ENCODE measurements at regions of chr2 and their contacts with region 1.

Region 1: GRCh38 chr2:112941753-112942658 is 31.0 kb downstream of the IL37 start:
- DNase-seq: peak; percentile 89
- H3K4me3 Mint-ChIP-seq: no peak overlapping the region
- H3K27ac Mint-ChIP-seq: no peak overlapping the region
- H3K4me1 Mint-ChIP-seq: peaks cover 11% of the 10 kb centered on the region
- H3K27me3 Mint-ChIP-seq: no peaks in the 10 kb centered on the region
- CTCF ChIP-seq: peak; percentile 92

Region 2: DNA sequence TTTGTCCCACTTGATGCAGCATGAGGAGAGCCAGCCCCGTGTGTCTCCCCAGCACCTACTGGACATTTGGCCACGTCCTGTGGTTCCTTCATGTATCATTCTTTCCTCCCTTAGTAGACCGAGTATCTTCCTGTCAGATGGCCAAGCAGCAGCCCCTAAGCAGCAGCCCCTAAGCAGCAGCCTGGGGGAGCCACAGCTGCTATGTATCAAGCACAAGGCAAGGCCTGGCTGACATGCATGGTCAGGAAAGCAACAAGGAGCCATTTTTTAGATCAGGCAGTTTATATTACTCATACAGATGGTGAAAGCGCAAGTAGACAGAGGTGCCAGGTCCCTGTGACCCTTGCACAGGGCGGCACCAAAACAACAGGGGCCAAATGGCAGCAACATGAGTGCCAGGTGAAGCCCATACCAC is 335.5 kb before region 1 on chr2:
- CTCF ChIA-PET with region 1: no interaction called
- POLR2A ChIA-PET with region 1: no interaction called
- intact Hi-C with region 1: loop called (anchors 5 kb)
- DNase-seq: no peak
- H3K4me3 Mint-ChIP-seq: no peak overlapping the region
- H3K27ac Mint-ChIP-seq: no peak overlapping the region
- H3K4me1 Mint-ChIP-seq: peaks cover 4% of the 10 kb centered on the region
- H3K27me3 Mint-ChIP-seq: no peaks in the 10 kb centered on the region
- CTCF ChIP-seq: no peak

Region 3: DNA sequence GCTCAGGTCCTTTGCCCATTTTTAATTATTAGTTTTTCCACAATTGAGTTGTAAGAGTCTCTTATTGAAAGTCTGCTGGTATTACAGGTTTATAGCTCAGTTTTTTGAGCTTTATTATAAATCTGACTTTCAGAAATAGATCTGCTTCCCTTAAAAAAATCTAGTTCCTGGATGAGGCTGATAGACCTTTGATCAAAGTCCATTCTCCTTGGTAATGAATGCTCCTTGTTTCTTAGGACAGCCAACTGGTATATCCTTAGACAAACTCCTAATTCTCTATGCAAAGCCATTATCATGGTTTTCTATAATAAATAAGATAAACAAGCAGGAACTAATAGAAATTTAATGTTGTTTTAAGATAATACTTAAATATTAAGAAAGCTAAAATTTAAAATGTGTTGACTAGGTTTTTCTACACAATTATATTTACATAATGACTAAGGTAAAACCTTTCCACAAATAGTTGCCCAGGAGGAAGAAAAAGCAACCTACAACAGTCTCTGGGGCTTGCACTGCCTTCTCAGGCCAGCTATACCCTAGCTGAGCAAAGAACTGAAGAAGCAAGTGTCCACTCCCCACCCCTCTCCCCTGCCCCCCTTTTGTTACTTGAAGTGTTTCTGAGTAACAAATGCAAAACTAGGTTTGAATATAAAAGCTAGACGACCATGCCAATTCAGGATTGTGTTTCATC is 204.3 kb before region 1 on chr2:
- CTCF ChIA-PET with region 1: interaction called, 57 read pairs
- POLR2A ChIA-PET with region 1: interaction called, 14 read pairs
- intact Hi-C with region 1: no loop called
- DNase-seq: no peak
- H3K4me3 Mint-ChIP-seq: no peak overlapping the region
- H3K27ac Mint-ChIP-seq: no peak overlapping the region
- H3K4me1 Mint-ChIP-seq: no peaks in the 10 kb centered on the region
- H3K27me3 Mint-ChIP-seq: no peaks in the 10 kb centered on the region
- CTCF ChIP-seq: no peak

Region 4: DNA sequence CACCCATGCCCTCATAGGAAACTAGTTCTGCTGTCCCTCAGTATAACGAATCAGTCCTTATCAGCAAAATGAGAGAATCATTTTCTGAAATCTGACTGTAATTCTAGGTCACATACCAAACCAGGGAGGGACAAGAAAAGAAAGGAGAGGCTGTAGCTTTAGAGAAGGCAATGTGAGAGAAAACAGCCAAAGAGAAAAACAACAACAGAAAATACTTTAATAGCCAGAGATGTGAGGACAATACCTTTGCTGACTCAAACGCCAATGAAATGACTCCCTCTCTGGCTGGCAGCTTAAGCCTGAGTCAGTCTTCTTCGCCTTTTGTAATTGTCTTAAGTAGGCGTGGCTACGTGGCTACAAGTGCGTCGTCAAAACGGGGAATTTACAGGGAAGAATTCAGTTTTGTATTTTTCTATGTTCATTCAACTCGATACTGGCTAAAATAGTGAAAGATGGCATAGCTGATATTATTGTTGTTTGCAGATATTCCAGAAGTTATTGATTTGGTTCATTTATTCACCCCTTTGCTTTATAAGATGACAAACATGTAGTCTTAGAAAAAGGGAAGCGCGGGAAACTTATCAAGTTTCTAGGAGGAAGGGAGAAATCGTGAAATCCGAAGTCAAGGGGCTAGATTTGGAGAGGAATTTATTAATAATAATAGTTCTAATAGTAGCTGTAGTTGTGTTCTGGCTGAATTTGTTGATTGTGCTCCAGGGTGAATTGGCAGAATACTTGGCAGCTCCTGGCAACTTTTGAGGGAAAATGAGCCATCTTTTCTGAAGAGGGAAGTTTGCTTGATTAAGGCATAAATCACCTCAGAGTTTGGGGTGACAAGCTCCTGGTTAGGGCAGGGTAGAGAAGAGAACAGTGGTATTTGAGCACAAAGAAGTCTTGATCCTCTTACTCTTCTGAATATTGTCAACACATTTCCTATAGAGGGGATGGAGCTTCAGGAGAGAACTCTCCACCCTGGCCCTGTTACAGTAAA is 157.5 kb before region 1 on chr2 and contains the start of gene IL1A:
- CTCF ChIA-PET with region 1: interaction called, 32 read pairs
- POLR2A ChIA-PET with region 1: interaction called, 12 read pairs
- intact Hi-C with region 1: no loop called
- DNase-seq: peak; percentile 92
- H3K4me3 Mint-ChIP-seq: peak within 1 kb of the TSS; percentile 79
- H3K27ac Mint-ChIP-seq: peak within 1 kb of the TSS; percentile 85
- H3K4me1 Mint-ChIP-seq: peaks cover 57% of the 10 kb centered on the region
- H3K27me3 Mint-ChIP-seq: no peaks in the 10 kb centered on the region
- CTCF ChIP-seq: no peak
- total RNA-seq, gene IL1A: 99.1 and 170 TPM in 2 replicates

Region 5: DNA sequence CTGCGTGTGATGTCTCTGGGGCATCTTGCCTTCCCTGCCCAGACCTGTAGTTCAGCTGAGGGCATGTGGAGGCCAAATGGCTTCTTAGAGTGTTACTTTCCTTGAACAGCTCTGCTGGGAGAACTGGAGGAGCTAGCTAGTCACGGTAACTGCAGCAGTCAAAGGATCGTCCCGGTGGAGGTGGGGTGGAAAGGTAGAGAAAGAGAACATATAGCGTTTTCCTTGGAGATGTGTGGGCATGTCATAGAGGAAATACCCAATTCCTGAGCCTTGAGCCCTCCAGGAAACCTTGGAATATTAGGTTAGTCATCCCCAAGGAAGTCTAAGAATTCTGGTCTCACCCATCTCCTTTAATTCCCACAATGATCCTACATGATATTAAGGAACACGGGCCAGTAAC is 64.6 kb before region 1 on chr2:
- CTCF ChIA-PET with region 1: interaction called, 10 read pairs
- POLR2A ChIA-PET with region 1: no interaction called
- intact Hi-C with region 1: no loop called
- DNase-seq: peak; percentile 53
- H3K4me3 Mint-ChIP-seq: no peak overlapping the region
- H3K27ac Mint-ChIP-seq: no peak overlapping the region
- H3K4me1 Mint-ChIP-seq: peaks cover 35% of the 10 kb centered on the region
- H3K27me3 Mint-ChIP-seq: no peaks in the 10 kb centered on the region
- CTCF ChIP-seq: no peak

Region 6: DNA sequence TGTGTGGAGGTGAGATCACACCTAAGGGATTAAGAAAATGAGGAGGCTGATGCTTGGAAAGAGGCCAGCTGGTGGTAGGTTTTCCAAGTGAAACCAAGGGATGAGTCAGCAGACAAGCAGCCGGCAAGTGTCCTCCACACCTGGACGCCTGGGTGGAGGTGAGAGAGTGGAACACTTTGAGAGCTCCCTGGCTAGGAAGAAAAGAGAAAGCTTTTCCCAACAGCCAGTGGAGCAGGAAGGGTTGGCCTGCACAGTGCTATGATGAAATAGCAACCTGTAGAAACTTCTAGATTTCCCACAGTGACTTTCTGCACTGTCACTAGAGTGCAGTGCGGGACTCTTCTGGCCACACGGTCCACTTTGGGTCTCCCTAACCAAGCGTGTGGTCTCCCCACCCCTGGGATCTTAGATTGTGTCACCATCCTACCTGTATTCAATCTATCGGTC is 50.6 kb before region 1 on chr2:
- CTCF ChIA-PET with region 1: interaction called, 39 read pairs
- POLR2A ChIA-PET with region 1: interaction called, 6 read pairs
- intact Hi-C with region 1: no loop called
- DNase-seq: peak; percentile 98
- H3K4me3 Mint-ChIP-seq: no peak overlapping the region
- H3K27ac Mint-ChIP-seq: peak overlapping the region; percentile 42
- H3K4me1 Mint-ChIP-seq: no peaks in the 10 kb centered on the region
- H3K27me3 Mint-ChIP-seq: no peaks in the 10 kb centered on the region
- CTCF ChIP-seq: no peak

Region 7: DNA sequence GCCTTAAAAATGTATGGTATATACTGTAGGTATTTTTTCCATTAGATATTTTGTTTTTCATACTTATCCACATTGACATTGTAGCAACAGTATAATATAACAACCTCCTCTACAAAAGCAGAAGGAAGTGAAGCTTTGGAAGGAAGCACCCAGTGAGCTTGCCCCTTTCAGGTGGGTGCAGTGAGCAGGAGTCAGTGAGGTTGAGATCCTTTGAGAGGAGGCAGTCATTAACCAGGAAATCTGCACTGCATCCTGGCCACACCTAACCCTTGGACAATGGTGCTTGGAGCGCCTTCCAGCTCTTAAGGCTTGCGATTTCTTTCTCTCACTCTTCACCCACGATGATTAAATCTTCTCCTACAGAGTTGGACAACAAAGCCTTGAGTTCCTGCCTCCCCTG is 17.2 kb before region 1 on chr2:
- CTCF ChIA-PET with region 1: interaction called, 15 read pairs
- POLR2A ChIA-PET with region 1: no interaction called
- intact Hi-C with region 1: no loop called
- DNase-seq: no peak
- H3K4me3 Mint-ChIP-seq: no peak overlapping the region
- H3K27ac Mint-ChIP-seq: no peak overlapping the region
- H3K4me1 Mint-ChIP-seq: no peaks in the 10 kb centered on the region
- H3K27me3 Mint-ChIP-seq: no peaks in the 10 kb centered on the region
- CTCF ChIP-seq: no peak

Region 8: DNA sequence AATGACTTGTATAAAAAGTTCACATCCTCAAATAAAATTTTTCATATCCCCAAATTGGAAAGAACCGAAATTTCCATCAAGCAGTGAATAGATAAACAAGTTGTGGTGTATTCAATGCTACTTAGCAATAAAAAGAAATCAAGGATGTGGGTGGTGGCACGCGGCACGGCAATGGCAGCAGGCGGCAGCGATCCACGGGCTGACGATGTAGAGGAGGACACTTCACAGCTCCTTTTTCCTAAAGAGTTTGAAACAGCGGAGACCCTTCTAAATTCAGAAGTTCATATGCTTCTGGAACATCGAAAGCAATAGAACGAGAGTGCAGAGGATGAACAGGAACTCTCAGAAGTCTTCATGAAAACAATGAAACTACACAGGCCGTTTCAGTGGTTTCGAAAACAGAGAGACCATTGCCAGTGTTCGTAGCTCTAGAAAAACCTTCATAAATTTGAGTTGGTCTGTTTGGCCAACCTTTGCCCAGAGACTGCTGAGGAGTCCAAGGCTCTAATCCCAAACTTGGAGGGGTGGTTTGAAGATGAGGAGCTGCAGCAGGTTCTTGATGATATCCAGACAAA is 53.4 kb after region 1 on chr2:
- CTCF ChIA-PET with region 1: no interaction called
- POLR2A ChIA-PET with region 1: no interaction called
- intact Hi-C with region 1: no loop called
- DNase-seq: no peak
- H3K4me3 Mint-ChIP-seq: no peak overlapping the region
- H3K27ac Mint-ChIP-seq: no peak overlapping the region
- H3K4me1 Mint-ChIP-seq: no peaks in the 10 kb centered on the region
- H3K27me3 Mint-ChIP-seq: peaks cover 19% of the 10 kb centered on the region
- CTCF ChIP-seq: no peak

Region 9: GRCh38 chr2:113124181-113124961 is 182.4 kb after region 1 on chr2:
- CTCF ChIA-PET with region 1: no interaction called
- POLR2A ChIA-PET with region 1: no interaction called
- intact Hi-C with region 1: no loop called
- DNase-seq: peak; percentile 66
- H3K4me3 Mint-ChIP-seq: no peak overlapping the region
- H3K27ac Mint-ChIP-seq: no peak overlapping the region
- H3K4me1 Mint-ChIP-seq: peaks cover 15% of the 10 kb centered on the region
- H3K27me3 Mint-ChIP-seq: no peaks in the 10 kb centered on the region
- CTCF ChIP-seq: no peak

Measured in MCF 10A (cell line).